ENCODE measurements at regions of chr12 and their contacts with region 1.

Region 1: DNA sequence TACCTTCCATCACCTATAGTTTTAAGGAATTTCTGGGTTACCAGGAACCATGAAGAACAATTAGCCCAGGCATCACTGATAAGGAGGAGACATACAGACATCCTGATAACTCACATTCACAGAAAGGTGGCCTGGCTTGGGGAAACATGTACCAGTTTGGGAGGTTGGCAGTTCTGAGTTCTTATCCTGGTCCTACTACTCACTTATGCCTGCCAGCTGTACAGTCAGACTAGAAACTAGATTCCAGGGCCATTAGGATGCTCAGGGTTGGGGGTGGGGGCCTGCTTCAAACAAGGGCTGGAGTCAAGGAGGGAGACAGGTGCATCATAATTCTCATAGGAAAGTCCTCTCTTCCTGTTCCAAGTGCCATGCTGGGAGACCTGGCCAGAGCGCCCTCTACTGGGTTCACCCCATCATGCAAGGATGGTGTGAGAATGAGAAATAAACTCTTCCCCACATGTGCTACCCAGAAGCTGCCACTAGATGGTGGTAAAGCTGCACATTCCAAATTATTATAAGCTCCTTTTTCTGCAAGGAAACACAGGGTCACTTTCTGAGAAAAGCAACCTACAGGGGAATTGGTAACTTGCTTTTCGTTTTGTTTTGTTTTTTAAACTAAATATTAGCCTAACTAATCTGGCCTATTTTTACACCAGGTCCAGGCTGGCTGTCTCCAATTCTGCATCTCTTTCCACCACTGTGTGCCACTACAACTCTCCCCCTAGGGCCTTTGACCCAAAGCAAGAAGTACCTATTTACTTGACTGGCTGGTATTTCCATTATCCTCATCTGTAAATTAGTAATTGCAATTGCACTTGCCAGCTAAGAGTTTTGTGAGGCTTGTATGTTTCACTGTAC is 14.5 kb downstream of the OAS2 start:
- DNase-seq: peak; percentile 88
- H3K4me3 Mint-ChIP-seq: no peak overlapping the region
- H3K27ac Mint-ChIP-seq: peak overlapping the region; percentile 22
- H3K4me1 Mint-ChIP-seq: peaks cover 28% of the 10 kb centered on the region
- H3K27me3 Mint-ChIP-seq: no peaks in the 10 kb centered on the region

Region 2: GRCh38 chr12:112368856-112369255 is 623.9 kb before region 1 on chr12:
- CTCF ChIA-PET with region 1: no interaction called
- intact Hi-C with region 1: no loop called
- DNase-seq: no peak
- H3K4me3 Mint-ChIP-seq: no peak overlapping the region
- H3K27ac Mint-ChIP-seq: no peak overlapping the region
- H3K4me1 Mint-ChIP-seq: peaks cover 4% of the 10 kb centered on the region
- H3K27me3 Mint-ChIP-seq: no peaks in the 10 kb centered on the region

Region 3: DNA sequence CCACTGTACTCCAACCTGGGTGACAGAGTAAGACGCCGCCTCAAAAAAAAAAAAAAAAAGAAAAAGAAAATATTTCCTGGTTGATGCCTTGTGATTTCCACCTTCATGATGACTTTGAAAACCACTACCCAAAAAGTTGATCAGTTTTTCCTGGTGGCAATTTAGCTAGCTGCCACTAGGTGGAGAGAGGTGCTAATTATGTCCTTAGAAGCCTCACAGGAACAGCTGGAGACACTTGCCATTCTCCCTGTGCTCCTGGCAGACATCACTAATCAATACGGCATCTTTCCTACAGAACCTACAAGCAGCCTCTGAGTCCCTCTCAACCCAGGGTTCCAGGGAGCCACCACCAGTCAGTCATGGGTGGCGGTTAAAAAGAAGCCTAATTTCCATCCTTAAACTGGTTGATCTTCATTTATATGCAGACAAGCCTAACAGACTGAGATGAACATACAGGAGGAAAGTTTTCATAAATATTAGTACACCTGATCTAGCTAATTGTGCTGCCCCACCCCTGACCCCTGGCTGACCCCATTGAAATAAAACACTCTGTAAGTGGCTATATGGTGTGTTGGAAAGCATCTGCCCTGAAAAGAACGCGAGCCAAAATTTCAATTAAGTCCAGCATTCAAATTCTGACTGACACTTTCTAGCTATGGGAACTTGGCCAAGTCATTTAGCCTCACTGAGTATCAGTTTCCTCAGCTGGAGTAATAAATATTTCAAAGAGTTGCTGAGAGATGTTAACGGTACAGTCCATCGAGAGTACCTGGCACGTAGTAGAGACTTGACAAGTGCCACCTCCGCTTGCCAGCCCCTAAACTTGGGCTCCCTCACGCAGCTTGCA is 92.2 kb before region 1 on chr12:
- CTCF ChIA-PET with region 1: interaction called, 29 read pairs
- intact Hi-C with region 1: no loop called
- DNase-seq: peak; percentile 65
- H3K4me3 Mint-ChIP-seq: no peak overlapping the region
- H3K27ac Mint-ChIP-seq: no peak overlapping the region
- H3K4me1 Mint-ChIP-seq: peaks cover 18% of the 10 kb centered on the region
- H3K27me3 Mint-ChIP-seq: no peaks in the 10 kb centered on the region

Region 4: GRCh38 chr12:112978163-112979040 is 14.4 kb before region 1 on chr12 and contains the start of gene OAS2:
- CTCF ChIA-PET with region 1: interaction called, 68 read pairs
- intact Hi-C with region 1: loop called (anchors 1 kb)
- DNase-seq: peak; percentile 93
- H3K4me3 Mint-ChIP-seq: peak within 1 kb of the TSS; percentile 81
- H3K27ac Mint-ChIP-seq: peak within 1 kb of the TSS; percentile 100
- H3K4me1 Mint-ChIP-seq: peaks cover 36% of the 10 kb centered on the region
- H3K27me3 Mint-ChIP-seq: no peaks in the 10 kb centered on the region
- total RNA-seq, gene OAS2: 191 to 196 TPM

Region 5: DNA sequence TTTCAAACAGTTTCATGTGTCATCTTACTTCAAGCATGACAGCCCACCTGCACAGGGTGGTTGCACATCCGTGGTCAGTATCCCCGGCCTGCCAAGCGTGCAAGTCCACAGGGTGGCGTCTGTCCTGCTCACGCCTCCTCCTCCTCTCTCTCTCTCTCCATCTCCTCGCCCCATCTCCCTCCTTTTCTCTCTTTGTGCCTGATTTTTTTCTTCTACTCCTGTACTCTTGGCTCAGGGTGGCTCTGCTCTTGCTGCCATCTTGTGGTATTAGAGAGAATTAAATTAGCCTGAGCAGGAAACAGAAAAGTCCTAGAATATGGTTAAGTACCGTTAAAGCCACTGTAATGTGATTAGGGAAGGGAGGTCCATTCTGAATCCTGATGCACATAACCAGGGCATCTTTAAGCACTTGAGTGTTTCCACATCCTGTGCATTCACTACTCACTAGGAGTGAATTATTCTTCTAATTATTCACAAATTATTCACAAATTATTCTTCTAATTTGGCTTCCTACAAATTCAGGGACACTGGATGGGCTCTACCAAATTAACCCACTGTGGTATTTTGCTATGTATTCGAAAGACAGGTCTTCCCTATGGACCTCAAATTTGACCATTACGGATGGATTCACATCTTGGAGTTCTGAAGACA is 38.2 kb after region 1 on chr12:
- CTCF ChIA-PET with region 1: interaction called, 9 read pairs
- intact Hi-C with region 1: loop called (anchors 1 kb)
- DNase-seq: peak; percentile 14
- H3K4me3 Mint-ChIP-seq: no peak overlapping the region
- H3K27ac Mint-ChIP-seq: no peak overlapping the region
- H3K4me1 Mint-ChIP-seq: no peaks in the 10 kb centered on the region
- H3K27me3 Mint-ChIP-seq: peaks cover 5% of the 10 kb centered on the region

Region 6: DNA sequence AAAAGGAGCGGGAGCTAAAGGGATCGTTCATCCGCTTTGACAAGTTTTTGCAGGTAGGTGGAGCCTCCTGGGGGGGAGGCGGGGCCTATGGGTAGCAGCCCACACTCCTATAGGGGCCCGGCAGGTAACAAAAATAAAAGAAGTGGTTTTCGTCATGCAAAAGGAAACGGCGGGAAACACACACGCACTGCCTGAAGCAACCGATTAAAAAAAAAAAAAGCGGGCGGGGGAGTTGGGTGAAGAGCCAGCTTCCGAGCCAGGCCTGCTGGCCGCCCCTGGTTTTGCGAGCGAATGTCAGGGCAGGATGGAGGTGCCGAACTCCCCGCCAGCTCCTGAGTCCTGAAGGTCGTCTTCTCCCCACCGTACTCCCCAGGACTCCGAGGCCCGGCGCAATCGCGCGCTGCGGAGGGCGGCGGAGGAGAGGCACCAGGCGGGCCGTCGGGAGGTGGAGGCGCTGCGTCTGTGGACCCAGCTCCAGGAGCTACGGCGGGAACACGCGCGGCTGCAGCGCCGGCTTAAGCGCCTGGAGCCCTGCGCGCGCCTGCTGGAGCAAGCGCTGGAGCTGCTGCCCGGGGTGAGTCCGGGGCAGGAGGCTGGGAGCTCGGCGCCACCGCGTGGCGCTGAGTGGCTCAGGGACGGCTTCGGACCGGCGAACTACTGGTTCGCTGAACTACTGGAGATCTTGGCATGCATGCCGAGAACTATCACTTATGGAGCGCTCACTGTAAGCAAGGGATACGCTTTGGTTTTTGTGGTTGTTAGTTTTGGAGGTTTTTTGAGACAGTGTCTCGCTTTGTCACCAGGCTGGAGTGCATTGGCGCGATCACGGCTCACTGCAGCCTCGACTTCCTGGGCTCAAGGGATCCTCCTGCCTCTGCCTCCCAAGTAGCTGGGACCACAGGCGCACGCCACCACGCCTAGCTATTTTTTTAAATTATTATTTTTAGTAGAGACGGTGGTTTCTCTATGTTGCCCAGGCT is 160.4 kb after region 1 on chr12:
- CTCF ChIA-PET with region 1: no interaction called
- intact Hi-C with region 1: loop called (anchors 1 kb)
- DNase-seq: peak; percentile 85
- H3K4me3 Mint-ChIP-seq: peak overlapping the region; percentile 75
- H3K27ac Mint-ChIP-seq: no peak overlapping the region
- H3K4me1 Mint-ChIP-seq: peaks cover 17% of the 10 kb centered on the region
- H3K27me3 Mint-ChIP-seq: peaks cover 7% of the 10 kb centered on the region

Region 7: GRCh38 chr12:113359133-113359938 is 366.6 kb after region 1 on chr12:
- CTCF ChIA-PET with region 1: no interaction called
- intact Hi-C with region 1: no loop called
- DNase-seq: no peak
- H3K4me3 Mint-ChIP-seq: peak overlapping the region; percentile 77
- H3K27ac Mint-ChIP-seq: peak overlapping the region; percentile 9
- H3K4me1 Mint-ChIP-seq: peaks cover 17% of the 10 kb centered on the region
- H3K27me3 Mint-ChIP-seq: no peaks in the 10 kb centered on the region

Region 8: DNA sequence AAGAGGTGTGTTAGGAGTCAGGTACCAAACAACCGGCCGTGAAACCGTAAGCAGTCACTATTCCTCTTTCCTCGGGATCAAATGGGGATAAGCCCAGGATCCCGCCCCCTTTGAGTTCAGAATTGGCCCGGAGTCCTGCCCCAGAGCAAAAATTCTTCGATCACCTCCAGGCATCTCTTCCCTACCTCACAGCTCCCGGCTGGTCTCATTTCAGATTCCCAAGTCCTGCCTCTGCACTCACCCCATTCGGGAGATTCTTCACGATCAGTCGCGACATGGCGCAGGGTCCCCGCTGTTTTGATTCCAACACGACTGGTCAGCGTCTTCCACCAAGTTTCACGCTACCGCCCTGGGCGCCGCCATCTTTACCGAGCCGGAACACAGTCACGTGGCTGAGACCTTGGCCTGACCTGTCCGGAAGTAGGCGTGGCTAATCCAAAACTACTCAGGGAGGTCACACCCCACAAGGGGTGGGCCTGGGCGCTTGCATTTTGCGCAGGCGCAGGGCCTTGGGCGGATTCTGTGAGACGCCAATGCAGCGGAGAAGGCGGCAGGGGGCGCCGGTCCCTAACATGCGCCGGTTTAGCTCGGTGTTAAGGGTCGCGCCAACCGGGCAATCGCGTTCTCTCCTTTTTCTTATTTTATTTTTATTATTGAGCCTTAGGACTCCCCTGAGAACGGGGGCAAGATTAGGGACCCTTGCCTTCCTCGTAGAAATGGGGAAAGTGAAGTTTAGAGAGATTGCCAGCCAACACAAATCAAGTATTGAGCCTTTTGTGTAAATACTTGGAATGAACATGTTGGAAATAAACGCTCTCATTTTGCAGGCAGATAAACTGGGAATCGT is 973.4 kb after region 1 on chr12 and contains the start of gene RBM19:
- CTCF ChIA-PET with region 1: no interaction called
- intact Hi-C with region 1: loop called (anchors 10 kb)
- DNase-seq: peak; percentile 98
- H3K4me3 Mint-ChIP-seq: peak within 1 kb of the TSS; percentile 100
- H3K27ac Mint-ChIP-seq: peak within 1 kb of the TSS; percentile 91
- H3K4me1 Mint-ChIP-seq: peaks cover 52% of the 10 kb centered on the region
- H3K27me3 Mint-ChIP-seq: no peaks in the 10 kb centered on the region
- total RNA-seq, gene RBM19: 89.0 to 96.2 TPM

Measured in activated naive CD4-positive, alpha-beta T cell treated with anti-CD3 and anti-CD28 coated beads for 36 hours (primary cell).